ENCODE measurements at regions of chr6 and their contacts with region 1.

Region 1: DNA sequence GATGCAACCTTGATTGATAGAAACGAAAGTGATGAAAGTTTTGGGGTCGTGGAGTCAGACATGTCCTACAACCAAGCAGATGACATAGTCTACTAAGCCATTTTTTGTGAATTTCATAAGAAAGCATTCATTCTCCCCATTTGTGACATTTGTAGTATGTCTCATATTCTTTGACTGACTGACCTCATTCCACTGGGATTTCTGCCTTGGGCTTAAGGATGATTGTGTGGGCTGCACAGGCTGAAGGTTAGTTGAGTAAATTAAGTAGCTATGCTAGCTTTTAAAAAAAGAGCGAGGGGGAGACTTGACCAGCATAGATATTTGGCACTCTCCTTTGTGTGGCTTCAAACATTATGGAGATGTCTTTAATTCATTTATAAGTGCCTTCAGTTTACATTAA is 28.9 kb downstream of the STMND1 start:
- DNase-seq: no peak
- ATAC-seq: no peak
- H3K4me3 ChIP-seq: no peak overlapping the region
- H3K27ac ChIP-seq: no peak overlapping the region
- H3K4me1 ChIP-seq: no peaks in the 10 kb centered on the region
- H3K27me3 ChIP-seq: no peaks in the 10 kb centered on the region

Region 2: DNA sequence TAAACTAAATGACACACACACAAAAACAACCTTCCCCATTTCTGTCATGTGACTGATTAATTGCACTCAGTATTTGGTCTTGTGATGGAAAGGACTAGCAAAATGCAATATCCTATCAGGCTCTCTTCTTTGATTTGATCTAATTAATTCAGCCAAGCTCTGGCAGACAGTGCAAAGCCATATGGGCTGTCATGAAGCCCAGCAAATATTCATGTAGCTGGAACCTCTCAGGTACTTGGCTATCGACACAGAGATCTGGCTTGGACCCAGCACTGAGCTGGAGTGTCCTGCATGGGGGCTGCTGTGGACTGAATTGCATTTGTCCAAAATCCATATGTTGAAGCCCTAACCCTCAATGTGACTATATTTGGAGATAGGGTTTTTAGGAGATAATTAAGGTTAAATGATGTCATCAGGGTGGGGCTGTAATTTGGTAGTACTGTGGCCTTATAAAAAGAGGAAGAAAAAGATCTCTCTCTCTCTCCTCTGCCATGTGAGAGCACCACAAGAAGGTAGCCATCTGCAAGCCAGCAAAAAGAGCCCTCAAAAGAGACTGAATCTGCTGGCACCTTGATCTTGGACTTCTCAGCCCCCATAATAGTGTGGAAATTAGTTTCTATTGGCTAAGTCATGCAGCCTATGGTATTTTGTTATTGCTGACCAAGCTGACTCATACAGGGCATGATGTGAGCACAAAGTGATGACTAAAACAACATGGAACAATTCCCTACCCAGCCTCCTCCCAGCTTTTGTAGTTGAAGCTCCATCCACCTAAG is 48.2 kb after region 1 on chr6:
- intact Hi-C with region 1: no loop called
- DNase-seq: no peak
- ATAC-seq: no peak
- H3K4me3 ChIP-seq: no peak overlapping the region
- H3K27ac ChIP-seq: no peak overlapping the region
- H3K4me1 ChIP-seq: no peaks in the 10 kb centered on the region
- H3K27me3 ChIP-seq: no peaks in the 10 kb centered on the region

Region 3: DNA sequence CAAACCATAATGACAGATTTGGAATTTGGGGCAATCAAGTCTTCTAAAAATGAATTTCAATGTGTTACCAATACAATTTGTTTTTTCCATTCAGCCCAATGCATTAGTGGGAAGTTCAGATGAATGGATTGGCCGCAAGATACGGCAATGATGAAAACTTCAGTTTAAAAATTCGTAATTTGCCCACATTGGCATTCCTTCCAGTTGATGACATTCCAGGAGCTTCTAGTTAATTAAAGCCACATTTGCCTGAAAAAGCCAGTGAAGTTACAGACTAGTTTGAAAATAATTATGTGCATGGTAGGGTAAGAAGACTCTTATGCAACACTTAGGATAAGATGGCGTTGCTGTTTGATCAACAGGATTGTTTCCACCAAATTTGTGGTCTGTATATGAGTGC is 945.4 kb after region 1 on chr6:
- intact Hi-C with region 1: loop called in 1 of 2 experiments (anchors 10 kb)
- DNase-seq: no peak
- ATAC-seq: no peak
- H3K4me3 ChIP-seq: no peak overlapping the region
- H3K27ac ChIP-seq: no peak overlapping the region
- H3K4me1 ChIP-seq: no peaks in the 10 kb centered on the region
- H3K27me3 ChIP-seq: no peaks in the 10 kb centered on the region

Measured in aorta (tissue), 5 donors.